ENCODE measurements at regions of chr14 and their contacts with region 1.

Region 1: GRCh38 chr14:64708148-64709004 is 4.2 kb downstream of the PLEKHG3 start:
- DNase-seq: peak; percentile 90
- ATAC-seq: peak; percentile 16

Region 2: DNA sequence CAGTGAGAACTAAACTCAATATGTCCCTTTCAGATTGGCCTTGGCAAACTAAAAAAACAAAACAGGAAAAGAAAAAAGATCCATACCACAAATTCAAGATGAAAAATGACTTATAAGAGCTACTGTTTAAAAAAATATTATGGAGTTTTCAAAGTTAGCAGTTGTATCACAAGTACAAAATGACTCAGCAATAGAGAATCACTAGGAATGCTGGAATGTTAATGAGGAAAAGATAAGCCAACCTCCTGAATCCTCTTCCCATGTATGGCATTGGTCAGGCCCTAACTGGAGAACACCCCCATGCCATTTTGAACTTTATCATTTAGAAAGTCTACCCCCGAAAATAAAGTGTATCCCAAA is 96.4 kb before region 1 on chr14:
- intact Hi-C with region 1: no loop called
- DNase-seq: no peak
- ATAC-seq: no peak

Region 3: DNA sequence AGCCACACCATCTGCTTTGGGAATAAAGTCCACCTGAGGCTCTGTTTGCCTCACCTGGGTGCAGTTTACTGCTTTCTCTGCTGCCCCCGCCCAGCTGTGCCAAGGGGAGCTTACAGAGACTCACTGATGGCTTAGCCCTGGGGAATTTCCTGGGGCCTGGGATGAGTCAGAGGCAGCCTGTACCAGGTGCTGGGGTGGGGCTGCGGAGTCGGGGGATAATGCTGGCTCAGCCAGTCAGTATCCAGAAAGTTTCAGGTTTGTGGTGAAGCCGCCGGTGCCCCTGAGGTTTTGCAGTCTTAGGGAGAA is 18.2 kb after region 1 on chr14:
- intact Hi-C with region 1: no loop called
- DNase-seq: no peak
- ATAC-seq: no peak

Region 4: DNA sequence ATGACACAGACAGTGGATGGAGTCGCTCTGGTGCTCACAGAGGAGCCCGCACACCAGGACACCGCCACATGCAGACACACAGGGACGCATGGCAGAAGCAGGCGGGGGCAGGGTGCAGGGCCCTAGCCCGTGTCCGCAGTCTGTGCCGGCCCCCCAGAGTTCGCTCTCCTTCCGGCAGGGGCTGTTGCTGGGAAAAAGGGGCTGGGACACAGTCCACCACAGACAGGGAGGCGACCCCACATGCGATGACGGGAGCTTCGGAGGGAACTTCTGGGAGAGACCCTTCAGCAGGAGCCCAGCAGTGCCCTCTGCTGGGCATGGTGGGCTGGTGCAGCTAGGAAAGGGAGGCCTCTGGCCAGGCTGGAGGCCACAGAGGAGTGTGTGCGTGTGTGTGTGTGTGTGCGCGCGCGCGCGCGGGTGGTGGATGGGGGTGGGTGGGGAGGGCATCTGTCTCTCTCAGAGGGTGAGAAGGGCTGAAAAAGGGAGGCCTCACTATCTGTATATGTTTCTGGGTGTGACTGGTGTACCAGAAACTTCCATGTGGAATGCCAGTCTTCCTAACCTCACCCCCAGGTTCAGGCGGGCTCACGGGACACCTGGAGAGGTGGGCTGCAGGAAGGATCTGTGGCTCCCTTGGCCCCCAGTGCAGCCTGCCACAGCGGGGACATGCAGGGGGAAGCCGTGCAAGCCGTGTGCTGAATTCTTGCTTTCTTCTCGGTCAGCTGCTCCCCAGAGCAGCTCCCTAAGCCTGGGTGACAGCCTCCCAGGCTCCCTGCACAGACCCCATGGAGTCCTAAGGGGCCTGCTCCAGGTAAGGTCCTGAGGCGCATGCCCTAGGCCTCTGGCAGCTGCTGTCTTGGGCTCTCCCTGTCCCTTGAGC is 56.5 kb after region 1 on chr14:
- intact Hi-C with region 1: loop called (anchors 5 kb)
- DNase-seq: peak; percentile 86
- ATAC-seq: peak; percentile 63